HCT116 (cell line): ENCODE measurements at regions of chr7 and their contacts with region 1.

Region 1: GRCh38 chr7:43582503-43583423 is at the start of gene STK17A:
- DNase-seq: peak; percentile 83
- ATAC-seq: peak; percentile 91
- H3K4me3 ChIP-seq: peak within 1 kb of the TSS; percentile 64 to 85
- H3K27ac ChIP-seq: peak within 1 kb of the TSS; percentile 82
- H3K4me1 ChIP-seq: peaks cover 9 to 22% of the 10 kb centered on the region in 2 experiments; a peak in 3 of 4 replicates
- H3K27me3 ChIP-seq: no peaks in the 10 kb centered on the region
- CTCF ChIP-seq: peak; percentile 95 to 99 (median 98)
- POLR2A ChIP-seq: peak; percentile 79
- RAD21 ChIP-seq: peak; percentile 97
- total RNA-seq, gene STK17A: 14.8 TPM

Region 2: DNA sequence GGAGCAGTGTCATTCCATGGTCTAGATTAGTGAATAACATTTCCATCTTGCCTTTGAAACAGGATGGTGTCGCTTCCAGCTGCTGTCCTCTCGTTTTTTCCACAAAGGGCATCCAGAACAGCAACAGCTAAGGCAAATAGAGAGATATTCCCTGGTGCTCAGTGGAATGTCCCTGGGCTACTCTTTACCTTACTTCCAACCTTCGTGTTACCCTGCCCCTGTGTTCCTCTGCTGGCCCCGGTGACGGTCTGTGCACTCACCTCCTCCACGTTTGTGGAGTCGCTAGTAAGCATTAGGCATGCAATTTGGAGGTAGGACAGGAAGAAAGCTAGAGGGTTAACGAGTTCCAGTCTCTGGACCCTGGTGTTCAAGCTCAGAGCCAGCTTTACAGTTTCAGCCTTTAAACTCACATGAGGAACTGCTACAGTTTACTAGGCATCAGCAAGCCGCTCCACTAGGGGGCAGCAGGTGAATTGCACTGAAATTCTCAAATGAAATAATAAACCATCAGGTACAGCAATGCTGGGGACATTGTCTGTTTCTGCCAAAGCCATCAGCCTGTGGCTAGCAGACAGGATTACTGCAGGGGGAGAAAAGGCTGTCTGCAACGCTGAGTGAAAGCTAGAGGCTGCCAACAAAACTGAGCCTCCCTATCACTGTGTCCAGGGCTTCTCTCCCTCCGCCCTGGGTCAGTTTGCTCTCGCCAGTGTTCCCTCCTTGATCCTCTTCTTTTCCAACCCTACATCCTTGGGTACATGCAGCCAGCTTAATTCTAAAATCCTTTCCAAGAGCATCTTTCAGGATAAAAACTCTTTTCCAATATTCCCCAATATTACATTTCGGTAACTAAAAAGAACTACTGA is 641.5 kb before region 1 on chr7:
- CTCF ChIA-PET with region 1: no interaction called
- POLR2A ChIA-PET with region 1: no interaction called
- RAD21 ChIA-PET with region 1: no interaction called
- intact Hi-C with region 1: loop called (anchors 5 kb)
- DNase-seq: peak; percentile 51
- ATAC-seq: peak; percentile 83
- H3K4me3 ChIP-seq: no peak overlapping the region
- H3K27ac ChIP-seq: no peak overlapping the region
- H3K4me1 ChIP-seq: no peaks in the 10 kb centered on the region
- H3K27me3 ChIP-seq: no peaks in the 10 kb centered on the region
- CTCF ChIP-seq: peak; percentile 81 to 94 (median 92)
- POLR2A ChIP-seq: no peak
- RAD21 ChIP-seq: peak; percentile 90

Region 3: GRCh38 chr7:43621729-43622448 is 39.1 kb after region 1 on chr7:
- CTCF ChIA-PET with region 1: interaction called, 12 read pairs
- POLR2A ChIA-PET with region 1: interaction called, 6 read pairs
- RAD21 ChIA-PET with region 1: no interaction called
- intact Hi-C with region 1: no loop called
- DNase-seq: no peak
- ATAC-seq: no peak
- H3K4me3 ChIP-seq: no peak overlapping the region
- H3K27ac ChIP-seq: no peak overlapping the region
- H3K4me1 ChIP-seq: peaks cover 13 to 16% of the 10 kb centered on the region in 2 experiments
- H3K27me3 ChIP-seq: no peaks in the 10 kb centered on the region
- CTCF ChIP-seq: no peak
- POLR2A ChIP-seq: no peak
- RAD21 ChIP-seq: no peak

Region 4: DNA sequence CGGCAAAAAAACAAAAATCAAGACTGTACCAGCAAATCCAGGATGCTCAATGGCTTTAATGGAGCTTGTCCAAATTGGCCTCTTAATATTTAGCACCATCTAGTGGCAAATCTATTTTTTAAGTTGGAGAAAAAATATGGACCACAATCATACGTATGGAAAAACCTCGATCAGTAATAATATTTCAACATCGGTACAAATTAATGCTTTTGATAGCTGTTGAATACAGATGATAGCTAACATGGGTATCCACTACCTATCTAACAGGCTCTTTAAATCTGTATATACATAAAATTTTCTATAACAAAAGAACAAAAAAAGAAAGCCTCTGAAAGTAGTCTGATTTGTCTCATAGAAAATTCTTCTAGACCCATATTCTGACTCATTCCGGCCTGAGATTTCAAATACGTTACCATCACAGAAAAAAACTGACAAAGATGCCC is 117.3 kb after region 1 on chr7:
- CTCF ChIA-PET with region 1: interaction called, 194 read pairs
- POLR2A ChIA-PET with region 1: interaction called, 46 read pairs
- RAD21 ChIA-PET with region 1: interaction called, 22 to 35 read pairs
- intact Hi-C with region 1: loop called (anchors 1 kb)
- DNase-seq: peak; percentile 31
- ATAC-seq: peak; percentile 60
- H3K4me3 ChIP-seq: no peak overlapping the region
- H3K27ac ChIP-seq: no peak overlapping the region
- H3K4me1 ChIP-seq: peaks cover 6 to 14% of the 10 kb centered on the region in 2 experiments
- H3K27me3 ChIP-seq: no peaks in the 10 kb centered on the region
- CTCF ChIP-seq: peak; percentile 57 to 95 (median 68)
- POLR2A ChIP-seq: no peak
- RAD21 ChIP-seq: peak; percentile 91

Region 5: DNA sequence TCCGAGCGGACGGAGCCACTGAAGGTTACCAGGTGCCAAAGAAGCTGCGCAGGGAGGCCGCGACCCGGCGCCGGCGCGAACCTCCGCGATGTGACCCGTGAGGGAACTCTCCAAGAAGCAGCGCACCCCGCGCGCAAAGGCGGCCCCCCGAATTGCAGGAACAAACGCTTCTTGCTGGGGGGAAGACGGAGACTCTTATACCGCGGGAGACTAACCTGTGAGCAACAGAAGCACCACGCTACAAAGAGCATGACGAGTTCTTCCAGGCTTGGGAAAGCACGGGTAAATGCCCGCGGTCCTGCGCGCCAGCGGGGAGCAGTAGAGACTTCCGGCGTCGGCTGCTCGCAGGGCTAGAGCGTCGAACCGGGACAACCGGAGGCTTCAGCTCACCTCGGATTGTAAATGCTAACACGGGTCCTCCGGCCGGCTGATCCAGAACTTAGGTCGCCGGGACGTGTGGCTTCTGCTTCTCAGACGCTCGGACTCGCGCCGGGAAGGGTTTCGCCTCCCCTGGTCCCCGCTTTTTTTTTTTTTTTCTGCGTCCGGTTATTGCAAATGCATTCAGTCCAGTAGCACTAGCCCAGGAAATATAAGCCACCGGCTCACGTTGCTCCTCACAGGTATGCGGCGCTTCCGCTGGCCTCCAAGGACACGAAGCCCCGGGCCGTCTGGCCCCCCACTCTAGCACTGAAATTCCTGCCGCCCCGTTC is 146.6 kb after region 1 on chr7 and contains the start of gene COA1:
- CTCF ChIA-PET with region 1: interaction called, 9 read pairs
- POLR2A ChIA-PET with region 1: interaction called, 11 read pairs
- RAD21 ChIA-PET with region 1: interaction called in 1 of 2 experiments, 5 read pairs
- intact Hi-C with region 1: no loop called
- DNase-seq: peak; percentile 90
- ATAC-seq: peak; percentile 96
- H3K4me3 ChIP-seq: peak within 1 kb of the TSS; percentile 81 to 97
- H3K27ac ChIP-seq: peak within 1 kb of the TSS; percentile 67
- H3K4me1 ChIP-seq: peaks cover 5 to 11% of the 10 kb centered on the region in 2 experiments; a peak in 3 of 4 replicates
- H3K27me3 ChIP-seq: no peaks in the 10 kb centered on the region
- CTCF ChIP-seq: no peak; a peak in 1 of 6 replicates
- POLR2A ChIP-seq: peak; percentile 86
- RAD21 ChIP-seq: peak; percentile 25; the same call in 1 of the 2 replicates
- total RNA-seq, gene COA1: 78.5 TPM

Region 6: GRCh38 chr7:43834463-43835251 is 251.9 kb after region 1 on chr7:
- CTCF ChIA-PET with region 1: interaction called, 23 read pairs
- POLR2A ChIA-PET with region 1: interaction called, 5 read pairs
- RAD21 ChIA-PET with region 1: interaction called in 1 of 2 experiments, 5 read pairs
- intact Hi-C with region 1: loop called (anchors 2 kb)
- DNase-seq: no peak
- ATAC-seq: no peak
- H3K4me3 ChIP-seq: no peak overlapping the region
- H3K27ac ChIP-seq: no peak overlapping the region
- H3K4me1 ChIP-seq: peaks cover 0 to 24% of the 10 kb centered on the region in 2 experiments; a peak in 2 of 4 replicates
- H3K27me3 ChIP-seq: no peaks in the 10 kb centered on the region
- CTCF ChIP-seq: no peak
- POLR2A ChIP-seq: no peak
- RAD21 ChIP-seq: no peak